Sigmoid colon (tissue), 7 donors: ENCODE measurements at regions of chr1 and their contacts with region 1.

Region 1: DNA sequence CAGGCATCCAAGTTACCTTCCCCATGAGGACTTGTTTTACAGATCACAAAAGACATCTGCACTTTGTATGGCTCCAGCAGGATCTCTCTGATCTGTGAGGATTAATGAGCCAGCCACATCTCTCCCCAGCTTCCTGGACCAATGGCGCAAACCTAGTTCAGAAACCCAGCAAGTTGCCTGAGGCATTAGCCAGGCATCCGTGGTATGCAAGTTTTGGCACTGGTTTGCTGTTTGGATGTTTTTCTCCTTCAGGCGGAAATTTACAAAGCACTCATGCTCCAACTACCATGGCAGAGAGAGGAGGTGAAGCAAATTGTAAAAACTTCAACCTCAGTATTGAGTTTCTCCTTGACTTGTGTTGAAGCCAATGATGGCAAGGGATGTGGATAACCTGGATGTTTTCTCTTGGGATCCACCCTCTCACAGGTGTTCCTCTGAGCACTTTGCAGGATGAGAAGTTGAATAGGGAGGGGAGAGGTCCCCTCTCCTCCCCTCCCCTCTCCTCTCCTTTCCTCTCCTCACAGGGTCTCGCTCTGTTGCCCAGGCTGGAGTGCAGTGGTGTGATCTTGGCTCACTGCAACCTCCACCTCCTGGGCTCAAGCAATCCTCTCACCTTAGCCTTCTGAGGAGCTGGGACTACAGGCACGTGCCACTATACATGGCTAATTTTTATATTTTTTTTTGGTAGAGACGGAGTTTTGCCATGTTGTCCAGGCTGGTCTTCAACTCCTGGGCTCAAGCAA is 25.6 kb upstream of the ENO1 start:
- DNase-seq: peak; percentile 74
- H3K4me3 ChIP-seq: no peak overlapping the region
- H3K27ac ChIP-seq: peak overlapping the region in 3 of 4 donors; percentile 35 to 60 (median 55)
- H3K4me1 ChIP-seq: peaks cover 0 to 14% (median 13%) of the 10 kb centered on the region in 4 donors
- H3K27me3 ChIP-seq: no peaks in the 10 kb centered on the region
- CTCF ChIP-seq: no peak
- EP300 ChIP-seq: no peak
- POLR2A ChIP-seq: no peak

Region 2: DNA sequence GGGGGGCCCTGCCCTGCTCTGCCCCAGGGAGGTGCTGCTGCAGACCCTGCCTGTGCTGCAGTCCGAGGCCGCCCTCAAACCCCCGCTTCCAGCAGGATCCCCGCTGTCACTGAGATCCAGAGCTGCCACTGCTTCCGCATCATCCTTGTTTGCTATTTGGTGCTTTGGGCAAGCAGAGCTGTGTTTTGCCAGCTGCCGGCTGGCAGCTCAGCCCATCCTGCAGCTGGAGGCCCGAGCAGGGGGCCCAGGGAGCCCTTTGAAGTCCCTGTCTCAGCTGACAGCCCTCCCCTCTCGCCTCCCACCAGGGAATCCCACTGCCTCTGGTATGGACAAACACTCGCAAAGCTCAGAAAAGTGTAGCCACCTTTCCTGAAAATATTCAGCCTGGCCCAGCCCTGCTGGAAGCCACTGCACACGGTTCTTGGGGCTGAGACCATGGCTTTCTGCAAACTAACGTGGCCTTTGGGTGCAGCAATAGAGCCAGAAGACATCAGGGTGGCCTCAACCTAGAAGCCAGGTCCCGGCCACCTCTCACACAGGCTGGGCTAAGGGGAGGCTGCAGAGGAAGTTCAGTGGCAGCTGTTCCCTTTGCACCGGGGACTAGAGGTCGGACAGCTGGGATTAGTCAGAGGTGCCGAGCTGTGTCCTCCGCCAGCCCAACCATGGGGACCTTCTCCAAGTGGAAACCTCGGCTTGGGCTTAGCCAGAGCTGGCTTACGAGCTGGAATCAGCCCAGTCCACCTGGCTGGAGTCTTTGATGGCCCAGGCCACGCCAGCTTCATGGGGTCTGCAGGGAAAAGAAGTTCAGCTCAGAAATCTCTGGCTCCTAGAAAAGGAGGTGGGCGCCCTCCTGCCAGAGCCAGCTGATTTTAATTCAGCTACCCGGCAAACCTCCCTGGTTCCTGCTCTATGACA is 495.7 kb after region 1 on chr1:
- intact Hi-C with region 1: loop called (anchors 10 kb)
- DNase-seq: peak; percentile 81
- H3K4me3 ChIP-seq: no peak overlapping the region
- H3K27ac ChIP-seq: peak overlapping the region in 2 of 4 donors; percentile 4 to 24
- H3K4me1 ChIP-seq: peaks cover 0 to 33% (median 12%) of the 10 kb centered on the region in 4 donors
- H3K27me3 ChIP-seq: no peaks in the 10 kb centered on the region
- CTCF ChIP-seq: no peak
- EP300 ChIP-seq: no peak
- POLR2A ChIP-seq: no peak